B cell (primary cell): ENCODE measurements at regions of chr22 and their contacts with region 1.

Region 1: DNA sequence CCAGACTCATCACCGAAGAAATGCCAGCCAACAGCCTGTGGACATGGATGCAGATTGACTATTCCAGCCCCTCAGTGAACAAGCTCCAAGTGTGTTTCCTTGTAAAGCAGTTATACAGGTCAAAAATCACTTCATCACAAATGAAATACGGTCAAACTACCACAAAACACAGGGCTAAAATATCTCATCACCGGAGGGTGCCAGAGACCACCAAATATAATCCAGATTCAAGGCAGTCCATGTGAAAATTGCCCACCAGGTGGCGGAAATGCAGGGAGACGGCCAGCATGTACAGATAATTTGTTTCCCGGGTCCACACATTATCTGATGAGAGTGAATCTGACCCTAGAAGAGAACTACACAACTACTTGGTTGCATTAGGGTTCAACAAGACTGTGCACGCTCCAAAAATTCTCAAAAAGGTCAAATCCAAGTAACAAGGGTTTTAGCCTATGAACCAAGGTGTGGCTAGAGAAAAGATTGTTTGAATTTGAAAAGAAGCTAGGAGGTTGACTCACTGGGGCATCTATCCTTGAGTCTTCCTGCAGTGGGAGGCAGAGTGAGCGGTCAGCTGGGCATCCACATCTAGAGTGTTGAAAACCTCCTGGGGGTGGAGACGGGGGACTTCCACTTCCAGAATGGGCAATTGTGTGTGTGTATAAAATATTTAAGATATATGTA is 71.7 kb downstream of the IGLL5 start:
- DNase-seq: peak; percentile 90
- ATAC-seq: peak; percentile 52
- H3K4me3 ChIP-seq: no peak overlapping the region
- H3K4me3 Mint-ChIP-seq: no peak overlapping the region
- H3K27ac ChIP-seq: no peak overlapping the region
- H3K27ac Mint-ChIP-seq: peak overlapping the region; percentile 43
- H3K4me1 ChIP-seq: peaks cover 11 to 18% of the 10 kb centered on the region in 2 donors
- H3K4me1 Mint-ChIP-seq: peaks cover 15% of the 10 kb centered on the region
- H3K27me3 ChIP-seq: no peaks in the 10 kb centered on the region
- H3K27me3 Mint-ChIP-seq: no peaks in the 10 kb centered on the region
- CTCF ChIP-seq: peak; percentile 95

Region 2: GRCh38 chr22:22327723-22328122 is 631.6 kb before region 1 on chr22:
- CTCF ChIA-PET with region 1: interaction called, 9 read pairs
- POLR2A ChIA-PET with region 1: no interaction called
- intact Hi-C with region 1: loop called (anchors 5 kb)
- DNase-seq: no peak
- ATAC-seq: peak; percentile 71
- H3K4me3 ChIP-seq: no peak overlapping the region
- H3K4me3 Mint-ChIP-seq: no peak overlapping the region
- H3K27ac ChIP-seq: no peak overlapping the region
- H3K27ac Mint-ChIP-seq: no peak overlapping the region
- H3K4me1 ChIP-seq: peaks cover 39 to 49% of the 10 kb centered on the region in 2 donors
- H3K4me1 Mint-ChIP-seq: peaks cover 38% of the 10 kb centered on the region
- H3K27me3 ChIP-seq: no peaks in the 10 kb centered on the region
- H3K27me3 Mint-ChIP-seq: peaks cover 9% of the 10 kb centered on the region
- CTCF ChIP-seq: no peak

Region 3: DNA sequence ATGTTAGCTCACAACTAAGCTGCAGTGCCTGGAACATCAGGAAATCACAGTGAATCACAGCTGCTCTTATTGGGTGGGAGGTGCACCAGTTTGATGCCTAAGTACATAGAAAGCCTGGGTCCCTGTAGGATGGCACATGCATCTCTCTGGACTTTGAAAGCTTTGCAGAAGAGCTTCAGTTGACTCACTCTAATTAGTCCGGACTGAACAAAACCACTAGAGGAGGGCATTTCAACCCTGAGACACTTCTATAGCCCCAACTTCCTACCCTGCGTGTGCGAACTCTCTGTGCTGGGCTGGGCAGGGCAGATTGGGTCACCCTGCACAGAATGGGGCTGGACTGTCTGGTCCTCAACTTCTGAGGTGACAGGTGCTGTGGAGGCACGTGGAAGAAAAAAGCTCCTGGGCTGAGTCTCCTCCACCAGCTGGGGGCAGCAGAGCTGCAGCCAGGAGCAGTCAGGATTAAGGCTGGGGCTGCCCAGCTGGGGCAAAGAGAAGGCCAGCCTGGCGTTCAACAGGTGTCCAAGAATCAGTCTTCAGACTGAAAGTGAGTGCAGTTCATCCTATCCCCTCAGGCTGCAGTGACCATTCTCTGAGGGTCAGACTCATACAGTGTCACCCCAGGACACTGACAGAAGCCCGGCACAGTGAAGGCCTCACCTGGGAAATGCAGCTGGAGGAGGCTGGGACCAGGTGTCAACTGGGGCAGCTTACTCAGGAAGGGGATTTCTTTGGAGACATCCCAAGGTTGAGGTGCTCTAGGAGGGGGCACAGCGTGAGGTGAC is 292.8 kb before region 1 on chr22:
- CTCF ChIA-PET with region 1: interaction called, 66 read pairs
- POLR2A ChIA-PET with region 1: no interaction called
- intact Hi-C with region 1: loop called (anchors 1 kb)
- DNase-seq: peak; percentile 63
- ATAC-seq: peak; percentile 78
- H3K4me3 ChIP-seq: no peak overlapping the region
- H3K4me3 Mint-ChIP-seq: no peak overlapping the region
- H3K27ac ChIP-seq: no peak overlapping the region
- H3K27ac Mint-ChIP-seq: peak overlapping the region; percentile 6
- H3K4me1 ChIP-seq: peaks cover 6 to 18% of the 10 kb centered on the region in 2 donors
- H3K4me1 Mint-ChIP-seq: peaks cover 17% of the 10 kb centered on the region
- H3K27me3 ChIP-seq: peaks cover 0 to 2% (median 0%) of the 10 kb centered on the region in 4 experiments
- H3K27me3 Mint-ChIP-seq: peaks cover 3% of the 10 kb centered on the region
- CTCF ChIP-seq: peak; percentile 71

Region 4: GRCh38 chr22:22753526-22754267 is 205.6 kb before region 1 on chr22:
- CTCF ChIA-PET with region 1: interaction called, 91 read pairs
- POLR2A ChIA-PET with region 1: no interaction called
- intact Hi-C with region 1: loop called (anchors 1 kb)
- DNase-seq: peak; percentile 79
- ATAC-seq: peak; percentile 86
- H3K4me3 ChIP-seq: no peak overlapping the region
- H3K4me3 Mint-ChIP-seq: no peak overlapping the region
- H3K27ac ChIP-seq: peak overlapping the region in 1 of 2 donors; percentile 12
- H3K27ac Mint-ChIP-seq: peak overlapping the region; percentile 72
- H3K4me1 ChIP-seq: peaks cover 14 to 17% of the 10 kb centered on the region in 2 donors
- H3K4me1 Mint-ChIP-seq: peaks cover 27% of the 10 kb centered on the region
- H3K27me3 ChIP-seq: no peaks in the 10 kb centered on the region
- H3K27me3 Mint-ChIP-seq: no peaks in the 10 kb centered on the region
- CTCF ChIP-seq: peak; percentile 74

Region 5: GRCh38 chr22:22870577-22871404 is 88.5 kb before region 1 on chr22:
- CTCF ChIA-PET with region 1: interaction called, 10 read pairs
- POLR2A ChIA-PET with region 1: no interaction called
- intact Hi-C with region 1: no loop called
- DNase-seq: peak; percentile 54
- ATAC-seq: peak; percentile 56
- H3K4me3 ChIP-seq: no peak overlapping the region
- H3K4me3 Mint-ChIP-seq: no peak overlapping the region
- H3K27ac ChIP-seq: no peak overlapping the region
- H3K27ac Mint-ChIP-seq: no peak overlapping the region
- H3K4me1 ChIP-seq: peaks cover 33 to 40% of the 10 kb centered on the region in 2 donors
- H3K4me1 Mint-ChIP-seq: peaks cover 39% of the 10 kb centered on the region
- H3K27me3 ChIP-seq: peaks cover 0 to 6% (median 3%) of the 10 kb centered on the region in 4 experiments
- H3K27me3 Mint-ChIP-seq: peaks cover 3% of the 10 kb centered on the region
- CTCF ChIP-seq: peak; percentile 44

Region 6: DNA sequence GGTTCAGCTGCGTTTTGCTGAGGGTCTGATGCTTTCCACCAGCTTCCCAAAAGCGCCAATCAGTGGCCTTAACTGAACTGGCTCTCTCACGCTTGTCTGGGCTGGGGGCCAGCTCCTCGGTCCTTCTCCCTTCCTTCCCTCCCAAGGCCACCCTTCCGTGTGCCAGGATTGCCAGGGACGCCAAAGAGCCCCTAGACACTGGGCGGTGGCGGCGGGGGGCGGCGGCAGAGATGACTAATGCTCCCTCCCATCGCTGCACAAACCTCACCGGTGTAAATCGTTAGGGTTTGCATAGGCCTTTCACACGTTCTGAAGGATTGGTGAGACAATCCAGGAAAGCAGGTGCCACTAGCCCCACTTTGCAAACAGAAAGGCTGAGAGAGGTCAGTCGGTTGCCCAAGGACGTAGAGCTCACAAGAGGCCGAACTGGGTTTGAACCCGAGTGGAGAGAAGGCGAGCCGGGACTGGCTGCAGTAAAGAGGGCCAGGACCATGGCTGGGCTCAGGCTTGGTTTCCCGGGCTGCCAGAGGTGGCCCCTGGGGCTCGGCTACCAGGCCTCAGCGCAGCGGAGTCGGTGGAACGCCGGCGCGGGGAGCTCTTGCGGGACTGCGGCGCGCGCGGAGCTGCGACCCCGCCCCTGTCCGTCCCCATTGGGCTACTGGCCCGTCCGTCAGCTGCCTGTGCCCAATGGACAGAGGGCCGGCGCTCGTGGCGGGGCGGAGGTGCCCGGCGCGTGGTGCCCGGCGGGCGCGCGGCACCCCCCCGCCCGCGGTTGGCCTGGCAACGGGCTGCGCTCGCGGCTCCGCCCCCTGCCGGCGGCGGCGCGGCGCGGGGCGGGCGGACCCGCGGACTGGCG is 110.4 kb after region 1 on chr22:
- CTCF ChIA-PET with region 1: interaction called, 16 read pairs
- POLR2A ChIA-PET with region 1: no interaction called
- intact Hi-C with region 1: no loop called
- DNase-seq: peak; percentile 94
- ATAC-seq: peak; percentile 97
- H3K4me3 ChIP-seq: peak overlapping the region; percentile 9 to 73 (median 47)
- H3K4me3 Mint-ChIP-seq: peak overlapping the region; percentile 94
- H3K27ac ChIP-seq: no peak overlapping the region
- H3K27ac Mint-ChIP-seq: peak overlapping the region; percentile 87
- H3K4me1 ChIP-seq: peaks cover 12 to 38% of the 10 kb centered on the region in 2 donors
- H3K4me1 Mint-ChIP-seq: peaks cover 40% of the 10 kb centered on the region
- H3K27me3 ChIP-seq: peaks cover 0 to 3% (median 0%) of the 10 kb centered on the region in 4 experiments
- H3K27me3 Mint-ChIP-seq: no peaks in the 10 kb centered on the region
- CTCF ChIP-seq: no peak

Region 7: DNA sequence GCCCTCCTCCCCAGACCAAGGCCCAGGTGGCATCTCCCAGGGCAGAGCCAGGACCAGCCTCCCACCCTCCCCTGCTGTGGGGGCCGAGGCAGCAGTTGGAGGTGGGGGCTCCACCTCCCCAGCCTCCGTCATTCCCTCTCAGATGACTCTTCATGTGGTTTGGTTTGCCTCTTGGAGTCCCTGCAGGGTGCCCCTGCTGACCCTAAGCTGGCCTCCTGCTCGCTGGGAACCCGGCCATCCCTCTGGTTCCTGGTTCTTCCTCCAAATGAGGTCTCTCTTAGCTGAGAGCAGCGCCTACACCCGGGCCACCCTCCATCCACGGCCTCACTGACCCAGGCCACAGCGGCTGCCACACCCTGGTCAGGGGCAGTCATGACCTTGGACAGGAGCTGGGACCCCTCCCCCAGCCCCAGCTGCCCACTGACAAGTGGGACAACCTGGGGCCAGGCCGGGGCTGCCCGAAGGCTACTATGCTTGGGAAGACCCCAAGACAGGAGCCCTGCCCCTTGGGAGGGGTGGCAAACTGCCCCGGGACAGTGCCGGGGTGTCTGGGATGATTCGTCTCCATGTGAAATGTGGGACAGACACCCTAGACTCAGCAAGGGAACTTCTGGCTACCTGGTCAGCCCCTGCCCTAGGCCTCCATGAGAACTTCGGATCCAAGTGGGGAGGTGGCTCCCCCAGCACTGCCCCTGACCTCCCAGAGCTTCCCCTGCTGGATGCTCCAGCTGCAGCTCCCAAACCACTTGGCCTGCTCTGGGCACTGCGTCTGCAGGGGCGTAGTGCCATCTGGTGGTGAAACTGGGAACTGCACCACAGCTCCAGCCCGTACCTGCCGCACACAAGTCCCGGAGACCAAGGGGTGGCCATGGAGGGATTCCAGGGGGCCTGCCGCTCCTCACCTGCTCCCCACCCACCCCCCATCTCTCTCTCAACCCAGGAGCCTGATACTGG is 426.3 kb after region 1 on chr22:
- CTCF ChIA-PET with region 1: interaction called, 25 read pairs
- POLR2A ChIA-PET with region 1: no interaction called
- intact Hi-C with region 1: no loop called
- DNase-seq: peak; percentile 87
- ATAC-seq: peak; percentile 92
- H3K4me3 ChIP-seq: no peak overlapping the region
- H3K4me3 Mint-ChIP-seq: no peak overlapping the region
- H3K27ac ChIP-seq: no peak overlapping the region
- H3K27ac Mint-ChIP-seq: no peak overlapping the region
- H3K4me1 ChIP-seq: peaks cover 0 to 3% of the 10 kb centered on the region in 2 donors
- H3K4me1 Mint-ChIP-seq: no peaks in the 10 kb centered on the region
- H3K27me3 ChIP-seq: peaks cover 0 to 22% (median 5%) of the 10 kb centered on the region in 4 experiments
- H3K27me3 Mint-ChIP-seq: peaks cover 12% of the 10 kb centered on the region
- CTCF ChIP-seq: peak; percentile 98